ENCODE measurements at regions of chr10 and their contacts with region 1.

Region 1: DNA sequence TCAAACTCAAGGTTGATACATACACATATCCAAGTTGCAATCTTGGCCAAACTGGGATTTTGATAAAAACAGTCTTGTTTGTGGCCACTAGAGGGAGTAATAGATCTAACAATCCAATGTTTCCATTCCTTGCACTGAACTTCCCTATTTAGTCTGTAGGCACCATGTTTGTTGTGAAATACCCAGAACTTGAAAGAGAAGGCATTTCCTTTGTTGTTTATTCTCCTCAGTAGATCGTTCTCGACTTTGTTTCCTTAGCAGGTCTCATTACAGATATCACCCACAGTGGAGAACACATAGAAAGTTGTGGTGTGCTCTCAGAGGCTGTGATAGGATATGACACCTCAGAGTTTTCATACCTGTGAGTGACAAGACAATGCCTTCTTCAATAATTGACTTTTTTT is 70.3 kb upstream of the MXI1 start:
- DNase-seq: no peak
- ATAC-seq: peak; percentile 86
- H3K4me3 Mint-ChIP-seq: no peak overlapping the region
- H3K27ac Mint-ChIP-seq: peak overlapping the region; percentile 15
- H3K4me1 Mint-ChIP-seq: peaks cover 34% of the 10 kb centered on the region
- H3K27me3 Mint-ChIP-seq: no peaks in the 10 kb centered on the region
- CTCF ChIP-seq: peak; percentile 98

Region 2: GRCh38 chr10:110147961-110148360 is 10.8 kb after region 1 on chr10:
- CTCF ChIA-PET with region 1: interaction called, 10 read pairs
- POLR2A ChIA-PET with region 1: no interaction called
- intact Hi-C with region 1: no loop called
- DNase-seq: peak; percentile 36
- ATAC-seq: peak; percentile 78
- H3K4me3 Mint-ChIP-seq: no peak overlapping the region
- H3K27ac Mint-ChIP-seq: no peak overlapping the region
- H3K4me1 Mint-ChIP-seq: peaks cover 4% of the 10 kb centered on the region
- H3K27me3 Mint-ChIP-seq: peaks cover 50% of the 10 kb centered on the region
- CTCF ChIP-seq: no peak

Region 3: GRCh38 chr10:110175416-110175815 is 38.3 kb after region 1 on chr10:
- CTCF ChIA-PET with region 1: no interaction called
- POLR2A ChIA-PET with region 1: no interaction called
- intact Hi-C with region 1: no loop called
- DNase-seq: no peak
- ATAC-seq: no peak
- H3K4me3 Mint-ChIP-seq: no peak overlapping the region
- H3K27ac Mint-ChIP-seq: no peak overlapping the region
- H3K4me1 Mint-ChIP-seq: peaks cover 2% of the 10 kb centered on the region
- H3K27me3 Mint-ChIP-seq: peaks cover 44% of the 10 kb centered on the region
- CTCF ChIP-seq: no peak

Region 4: DNA sequence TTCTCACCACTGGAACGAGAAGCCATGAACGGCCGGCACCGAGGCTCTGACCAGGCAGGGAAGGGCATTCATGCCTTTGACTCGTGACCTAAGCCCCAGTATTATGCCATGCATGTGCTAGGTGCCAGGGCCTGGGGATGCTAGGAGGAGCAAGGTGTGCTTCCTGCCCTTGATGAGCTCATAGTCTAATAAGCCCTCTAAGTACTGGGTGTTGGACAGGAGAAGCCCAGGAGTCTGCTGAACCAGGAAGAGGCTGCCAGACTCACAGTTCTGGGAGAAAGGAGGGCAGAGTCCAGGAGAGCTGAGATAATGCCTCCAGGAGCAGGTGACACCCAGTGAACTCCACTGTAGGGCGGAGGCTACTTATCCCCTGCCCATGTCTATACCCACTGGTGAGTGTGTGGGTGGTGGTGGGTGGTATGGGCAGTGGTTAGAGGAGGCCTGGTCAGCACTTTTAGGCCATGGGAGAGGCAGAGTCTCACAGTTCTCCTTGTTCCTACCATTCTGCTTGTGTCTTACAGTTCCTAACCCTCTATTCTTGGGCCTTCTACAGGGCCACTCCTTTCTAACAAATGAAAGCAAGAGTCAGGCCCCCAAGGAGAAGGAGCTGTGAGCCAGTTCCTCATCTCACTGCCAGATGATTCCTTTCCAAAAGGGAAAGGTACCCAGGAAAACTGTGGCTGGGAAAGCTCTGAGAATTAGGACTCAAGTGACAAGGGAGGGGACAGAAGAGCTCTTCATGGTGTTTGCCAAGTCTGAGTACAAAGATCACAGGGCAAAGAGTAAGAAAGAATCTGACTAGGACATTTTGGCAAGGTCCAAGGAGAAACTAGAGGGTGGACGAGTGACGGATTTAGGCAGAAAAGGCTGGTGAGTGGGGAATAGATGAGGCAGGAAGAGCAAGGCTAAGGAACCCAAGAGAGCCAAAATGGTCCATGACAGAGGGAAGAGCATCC is 66.6 kb after region 1 on chr10:
- CTCF ChIA-PET with region 1: interaction called, 14 read pairs
- POLR2A ChIA-PET with region 1: no interaction called
- intact Hi-C with region 1: loop called (anchors 5 kb)
- DNase-seq: no peak
- ATAC-seq: no peak
- H3K4me3 Mint-ChIP-seq: no peak overlapping the region
- H3K27ac Mint-ChIP-seq: no peak overlapping the region
- H3K4me1 Mint-ChIP-seq: peaks cover 16% of the 10 kb centered on the region
- H3K27me3 Mint-ChIP-seq: peaks cover 31% of the 10 kb centered on the region
- CTCF ChIP-seq: no peak

Region 5: GRCh38 chr10:110225756-110226542 is 88.8 kb after region 1 on chr10:
- CTCF ChIA-PET with region 1: interaction called, 15 read pairs
- POLR2A ChIA-PET with region 1: interaction called, 3 read pairs
- intact Hi-C with region 1: loop called (anchors 5 kb)
- DNase-seq: peak; percentile 89
- ATAC-seq: peak; percentile 65
- H3K4me3 Mint-ChIP-seq: peak overlapping the region; percentile 94
- H3K27ac Mint-ChIP-seq: peak overlapping the region; percentile 96
- H3K4me1 Mint-ChIP-seq: peaks cover 38% of the 10 kb centered on the region
- H3K27me3 Mint-ChIP-seq: no peaks in the 10 kb centered on the region
- CTCF ChIP-seq: peak; percentile 63

Region 6: DNA sequence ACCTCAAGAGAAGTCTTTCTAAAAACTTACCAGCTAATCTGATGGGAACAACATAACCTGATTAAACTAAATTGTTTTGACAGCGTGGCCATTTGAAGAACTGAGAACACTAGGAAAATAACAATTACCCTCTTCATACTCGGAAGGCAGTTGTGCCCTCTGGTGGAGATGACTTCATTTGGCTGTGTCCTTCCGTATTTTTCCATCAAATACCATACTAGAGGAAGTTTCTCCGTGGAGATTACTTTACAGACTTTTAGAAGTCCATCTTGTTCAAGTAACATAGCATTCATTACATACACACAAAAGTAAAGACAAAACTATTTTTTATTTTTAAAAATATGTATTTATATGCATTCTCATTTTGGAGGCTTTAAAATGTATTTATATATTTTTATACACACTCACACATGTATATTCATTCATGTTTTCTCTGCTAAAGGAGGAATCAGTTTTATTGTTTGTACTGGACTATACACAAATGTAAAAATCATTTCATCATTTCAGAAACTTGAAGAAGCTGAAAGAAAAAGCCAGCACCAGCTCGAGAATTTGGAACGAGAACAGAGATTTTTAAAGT is 142.4 kb after region 1 on chr10:
- CTCF ChIA-PET with region 1: interaction called, 51 read pairs
- POLR2A ChIA-PET with region 1: no interaction called
- intact Hi-C with region 1: loop called (anchors 1 kb)
- DNase-seq: peak; percentile 63
- ATAC-seq: peak; percentile 51
- H3K4me3 Mint-ChIP-seq: no peak overlapping the region
- H3K27ac Mint-ChIP-seq: no peak overlapping the region
- H3K4me1 Mint-ChIP-seq: peaks cover 15% of the 10 kb centered on the region
- H3K27me3 Mint-ChIP-seq: no peaks in the 10 kb centered on the region
- CTCF ChIP-seq: peak; percentile 74

Measured in activated CD8-positive, alpha-beta T cell treated with anti-CD3 and anti-CD28 coated beads for 36 hours (primary cell).